Endothelial cell of umbilical vein (primary cell): ENCODE measurements at regions of chr12 and their contacts with region 1.

Region 1: GRCh38 chr12:62813031-62813829 is 121.7 kb downstream of the PPM1H start:
- DNase-seq: peak; percentile 68
- H3K4me3 ChIP-seq: no peak overlapping the region
- H3K27ac ChIP-seq: no peak overlapping the region
- H3K4me1 ChIP-seq: peaks cover 4% of the 10 kb centered on the region
- H3K27me3 ChIP-seq: no peaks in the 10 kb centered on the region
- CTCF ChIP-seq: peak; percentile 82 to 90
- POLR2A ChIP-seq: no peak

Region 2: GRCh38 chr12:62435303-62436163 is 377.7 kb before region 1 on chr12:
- CTCF ChIA-PET with region 1: interaction called, 83 read pairs
- POLR2A ChIA-PET with region 1: no interaction called
- dilution Hi-C with region 1: no loop called
- intact Hi-C with region 1: loop called (anchors 1 kb)
- DNase-seq: peak; percentile 52
- H3K4me3 ChIP-seq: peak overlapping the region; percentile 4 to 51 (median 23)
- H3K27ac ChIP-seq: no peak overlapping the region
- H3K4me1 ChIP-seq: peaks cover 9% of the 10 kb centered on the region
- H3K27me3 ChIP-seq: peaks cover 12 to 30% of the 10 kb centered on the region in 2 experiments
- CTCF ChIP-seq: peak; percentile 37 to 78
- POLR2A ChIP-seq: no peak

Region 3: GRCh38 chr12:62799126-62799736 is 14.0 kb before region 1 on chr12:
- CTCF ChIA-PET with region 1: interaction called, 19 read pairs
- POLR2A ChIA-PET with region 1: no interaction called
- dilution Hi-C with region 1: no loop called
- intact Hi-C with region 1: no loop called
- DNase-seq: peak; percentile 73
- H3K4me3 ChIP-seq: no peak overlapping the region
- H3K27ac ChIP-seq: no peak overlapping the region
- H3K4me1 ChIP-seq: no peaks in the 10 kb centered on the region
- H3K27me3 ChIP-seq: no peaks in the 10 kb centered on the region
- CTCF ChIP-seq: peak; percentile 88 to 91
- POLR2A ChIP-seq: no peak

Region 4: GRCh38 chr12:62891805-62892549 is 78.7 kb after region 1 on chr12:
- CTCF ChIA-PET with region 1: no interaction called
- POLR2A ChIA-PET with region 1: no interaction called
- dilution Hi-C with region 1: no loop called
- intact Hi-C with region 1: no loop called
- DNase-seq: no peak
- H3K4me3 ChIP-seq: no peak overlapping the region
- H3K27ac ChIP-seq: no peak overlapping the region
- H3K4me1 ChIP-seq: no peaks in the 10 kb centered on the region
- H3K27me3 ChIP-seq: no peaks in the 10 kb centered on the region
- CTCF ChIP-seq: no peak
- POLR2A ChIP-seq: no peak

Region 5: DNA sequence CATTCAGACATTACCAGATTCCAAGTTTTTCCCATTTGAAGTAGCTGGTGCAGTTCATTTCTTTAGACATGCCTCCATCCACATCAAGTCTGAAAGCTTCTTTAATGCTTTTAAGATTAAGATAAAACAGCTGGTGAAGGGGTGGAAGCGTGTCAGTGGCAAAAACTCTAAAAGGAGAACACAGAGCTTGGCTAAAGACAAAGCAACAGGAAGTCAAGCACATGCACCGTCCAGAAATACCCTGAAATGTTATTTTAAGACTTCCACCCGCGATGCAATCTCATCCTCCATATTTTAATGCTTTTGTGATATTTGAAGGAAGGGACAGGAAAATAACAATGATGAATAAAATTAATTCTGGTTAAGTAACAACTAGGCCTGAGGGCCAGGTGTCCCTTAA is 89.9 kb after region 1 on chr12:
- CTCF ChIA-PET with region 1: no interaction called
- POLR2A ChIA-PET with region 1: no interaction called
- dilution Hi-C with region 1: no loop called
- intact Hi-C with region 1: loop called (anchors 1 kb)
- DNase-seq: peak; percentile 94
- H3K4me3 ChIP-seq: no peak overlapping the region
- H3K27ac ChIP-seq: peak overlapping the region; percentile 64
- H3K4me1 ChIP-seq: peaks cover 11% of the 10 kb centered on the region
- H3K27me3 ChIP-seq: peaks cover 0 to 3% of the 10 kb centered on the region in 2 experiments
- CTCF ChIP-seq: no peak
- POLR2A ChIP-seq: no peak

Region 6: DNA sequence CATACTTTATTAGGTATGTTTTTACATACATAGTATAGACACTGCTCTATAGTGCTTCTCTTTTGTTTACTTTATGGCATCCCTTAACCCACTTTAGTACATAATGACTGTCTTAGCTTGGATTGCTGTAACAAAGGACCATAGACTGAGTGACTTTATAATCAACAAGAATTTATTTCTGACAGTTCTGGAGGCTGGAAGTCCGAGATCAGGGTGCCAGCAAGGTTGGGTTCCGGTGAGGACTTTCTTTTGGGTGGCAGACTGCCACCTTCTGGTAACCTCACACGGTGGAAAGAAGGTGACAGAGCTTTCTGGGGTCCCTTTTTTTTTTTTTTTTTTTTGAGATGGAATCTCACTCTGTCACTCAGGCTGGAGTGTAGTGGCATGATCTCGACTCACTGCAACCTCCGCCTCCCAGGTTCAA is 170.4 kb after region 1 on chr12:
- CTCF ChIA-PET with region 1: interaction called, 3 read pairs
- POLR2A ChIA-PET with region 1: no interaction called
- dilution Hi-C with region 1: no loop called
- intact Hi-C with region 1: loop called (anchors 1 kb)
- DNase-seq: no peak
- H3K4me3 ChIP-seq: no peak overlapping the region
- H3K27ac ChIP-seq: no peak overlapping the region
- H3K4me1 ChIP-seq: no peaks in the 10 kb centered on the region
- H3K27me3 ChIP-seq: peaks cover 0 to 2% of the 10 kb centered on the region in 2 experiments
- CTCF ChIP-seq: no peak
- POLR2A ChIP-seq: no peak